Aorta (tissue), 5 donors: ENCODE measurements at regions of chr17 and their contacts with region 1.

Region 1: GRCh38 chr17:32936894-32937500 is 9.0 kb downstream of the TMEM98 start:
- DNase-seq: peak; percentile 77 to 91
- ATAC-seq: peak; percentile 84
- H3K4me3 ChIP-seq: no peak overlapping the region
- H3K27ac ChIP-seq: peak overlapping the region in 1 of 2 donors; percentile 38
- H3K4me1 ChIP-seq: peaks cover 0 to 3% of the 10 kb centered on the region in 2 donors
- H3K27me3 ChIP-seq: no peaks in the 10 kb centered on the region

Region 2: DNA sequence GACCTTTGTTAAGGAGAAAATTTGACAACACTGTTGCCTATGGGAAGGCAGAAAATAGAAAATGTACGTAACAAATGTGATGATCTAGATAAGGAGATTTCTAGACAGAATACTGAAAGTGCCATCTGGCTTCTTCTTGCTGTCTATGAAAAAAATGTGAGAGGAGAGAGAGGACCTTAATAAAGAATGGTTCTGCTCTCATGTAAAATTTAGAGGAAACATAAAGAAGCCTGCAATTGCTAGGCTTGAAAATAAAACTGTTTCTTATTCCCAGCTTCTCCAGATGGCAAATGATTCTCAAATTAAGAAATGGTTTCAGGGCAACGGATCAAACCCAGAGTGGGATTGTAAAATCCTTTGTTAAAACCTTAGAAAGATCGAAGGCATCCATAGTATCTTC is 321.7 kb before region 1 on chr17:
- intact Hi-C with region 1: no loop called
- DNase-seq: no peak
- ATAC-seq: no peak
- H3K4me3 ChIP-seq: no peak overlapping the region
- H3K27ac ChIP-seq: no peak overlapping the region
- H3K4me1 ChIP-seq: no peaks in the 10 kb centered on the region
- H3K27me3 ChIP-seq: no peaks in the 10 kb centered on the region

Region 3: GRCh38 chr17:32627239-32627996 is 309.6 kb before region 1 on chr17:
- intact Hi-C with region 1: no loop called
- DNase-seq: no peak
- ATAC-seq: no peak
- H3K4me3 ChIP-seq: no peak overlapping the region
- H3K27ac ChIP-seq: no peak overlapping the region
- H3K4me1 ChIP-seq: no peaks in the 10 kb centered on the region
- H3K27me3 ChIP-seq: no peaks in the 10 kb centered on the region

Region 4: GRCh38 chr17:32664936-32665583 is 271.9 kb before region 1 on chr17:
- intact Hi-C with region 1: loop called in 1 of 2 experiments (anchors 10 kb)
- DNase-seq: no peak
- ATAC-seq: no peak
- H3K4me3 ChIP-seq: no peak overlapping the region
- H3K27ac ChIP-seq: no peak overlapping the region
- H3K4me1 ChIP-seq: no peaks in the 10 kb centered on the region
- H3K27me3 ChIP-seq: no peaks in the 10 kb centered on the region

Region 5: GRCh38 chr17:32971171-32971570 is 34.2 kb after region 1 on chr17:
- intact Hi-C with region 1: no loop called
- DNase-seq: no peak
- ATAC-seq: no peak
- H3K4me3 ChIP-seq: no peak overlapping the region
- H3K27ac ChIP-seq: no peak overlapping the region
- H3K4me1 ChIP-seq: no peaks in the 10 kb centered on the region
- H3K27me3 ChIP-seq: no peaks in the 10 kb centered on the region

Region 6: GRCh38 chr17:33142705-33143299 is 205.8 kb after region 1 on chr17:
- intact Hi-C with region 1: no loop called
- DNase-seq: no peak
- ATAC-seq: no peak
- H3K4me3 ChIP-seq: no peak overlapping the region
- H3K27ac ChIP-seq: no peak overlapping the region
- H3K4me1 ChIP-seq: no peaks in the 10 kb centered on the region
- H3K27me3 ChIP-seq: no peaks in the 10 kb centered on the region